AG04449 (cell line): ENCODE measurements at regions of chr10 and their contacts with region 1.

Region 1: GRCh38 chr10:12710594-12711349 is 290.7 kb downstream of the CCDC3 start:
- DNase-seq: peak; percentile 45
- H3K4me3 ChIP-seq: no peak overlapping the region
- CTCF ChIP-seq: peak; percentile 94

Region 2: GRCh38 chr10:12252882-12253546 is 457.8 kb before region 1 on chr10:
- CTCF ChIA-PET with region 1: interaction called, 13 read pairs
- POLR2A ChIA-PET with region 1: no interaction called
- DNase-seq: no peak
- H3K4me3 ChIP-seq: no peak overlapping the region
- CTCF ChIP-seq: peak; percentile 22

Region 3: GRCh38 chr10:12656518-12657142 is 54.1 kb before region 1 on chr10:
- CTCF ChIA-PET with region 1: interaction called, 19 read pairs
- POLR2A ChIA-PET with region 1: no interaction called
- DNase-seq: peak; percentile 29
- H3K4me3 ChIP-seq: no peak overlapping the region
- CTCF ChIP-seq: peak; percentile 48

Region 4: DNA sequence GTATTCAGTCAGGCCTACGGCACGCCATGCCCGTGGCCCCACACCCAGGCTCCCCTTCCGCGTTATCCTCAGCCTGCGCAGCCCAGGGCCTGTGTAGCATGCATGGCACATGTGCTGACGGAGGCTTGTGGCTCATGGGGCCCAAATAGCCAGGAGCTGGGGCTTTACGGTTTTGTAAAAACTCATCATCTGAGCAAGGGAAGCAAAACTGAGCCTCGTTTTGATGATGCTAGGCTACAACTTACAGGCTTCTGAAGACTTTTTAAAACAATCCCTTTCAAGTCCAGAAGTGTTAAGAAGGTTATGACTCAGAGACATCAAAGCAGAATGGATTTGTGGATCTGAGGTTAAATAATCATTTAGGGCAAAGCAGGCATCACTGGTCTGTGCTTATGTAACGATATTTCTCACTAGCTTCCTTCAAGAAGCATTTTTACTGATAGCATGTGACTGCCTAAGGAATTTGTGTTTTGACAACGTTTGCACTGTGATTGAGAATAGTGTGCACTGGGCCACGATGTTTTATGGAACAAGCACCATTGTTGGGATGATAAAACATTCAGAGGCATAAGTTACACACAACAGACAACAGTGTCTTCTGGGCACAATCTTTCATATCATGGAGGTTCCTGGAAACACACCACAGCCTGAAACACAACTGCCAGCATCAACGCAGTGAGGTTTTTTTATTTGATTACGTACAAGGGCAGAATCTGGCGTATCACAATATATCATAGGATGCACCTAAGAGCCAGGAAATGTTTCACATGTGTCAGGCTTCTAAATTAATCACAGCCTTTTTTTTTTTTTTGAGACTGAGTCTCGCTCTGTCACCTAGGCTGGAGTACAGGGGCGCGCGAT is 16.4 kb after region 1 on chr10:
- CTCF ChIA-PET with region 1: interaction called, 25 read pairs
- POLR2A ChIA-PET with region 1: no interaction called
- DNase-seq: no peak
- H3K4me3 ChIP-seq: no peak overlapping the region
- CTCF ChIP-seq: no peak